ENCODE measurements at regions of chr20 and their contacts with region 1.

Region 1: GRCh38 chr20:50561379-50562078 is 51.3 kb downstream of the PTPN1 start:
- DNase-seq: peak; percentile 90
- H3K4me3 ChIP-seq: 0 out of 2 replicates have a peak overlapping the region, but pooled peaks have one; percentile 4
- H3K27ac ChIP-seq: peak overlapping the region; percentile 95
- H3K27me3 ChIP-seq: no peaks in the 10 kb centered on the region
- CTCF ChIP-seq: no peak

Region 2: GRCh38 chr20:50534567-50535551 is 26.7 kb before region 1 on chr20:
- CTCF ChIA-PET with region 1: no interaction called
- POLR2A ChIA-PET with region 1: interaction called, 12 read pairs
- DNase-seq: peak; percentile 58
- H3K4me3 ChIP-seq: no peak overlapping the region
- H3K27ac ChIP-seq: peak overlapping the region; percentile 86
- H3K27me3 ChIP-seq: no peaks in the 10 kb centered on the region
- CTCF ChIP-seq: no peak

Region 3: DNA sequence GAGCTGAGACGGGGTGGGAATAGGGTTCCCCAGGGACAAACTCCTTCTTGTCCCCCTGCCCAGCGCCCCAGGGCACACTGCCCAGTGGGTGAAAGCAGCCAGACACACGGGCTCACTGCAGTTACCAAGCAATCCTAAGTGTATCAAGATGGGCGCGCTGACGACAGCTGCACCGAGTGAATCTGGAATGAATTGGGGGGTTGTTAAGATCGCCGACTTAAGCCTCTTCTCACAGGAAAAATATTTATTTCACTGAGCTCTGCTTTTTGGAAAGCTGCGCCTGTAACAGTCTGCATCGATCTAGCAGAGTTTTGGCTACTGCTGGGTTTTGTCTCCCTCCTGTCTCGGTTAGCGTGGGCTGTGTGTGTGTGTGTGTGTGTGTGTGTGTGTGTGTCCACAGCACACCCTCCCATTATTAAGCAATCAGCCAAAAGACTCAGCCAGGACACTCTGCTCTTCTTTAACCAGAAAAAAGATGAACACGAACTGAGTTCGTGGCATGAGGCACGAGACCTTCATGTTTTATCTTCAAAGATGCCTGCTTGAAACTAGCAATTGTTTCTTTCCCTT is 93.9 kb after region 1 on chr20:
- CTCF ChIA-PET with region 1: interaction called, 11 read pairs
- POLR2A ChIA-PET with region 1: no interaction called
- DNase-seq: peak; percentile 93
- H3K4me3 ChIP-seq: peak overlapping the region; percentile 12; the same call in 1 of the 2 replicates
- H3K27ac ChIP-seq: peak overlapping the region; percentile 97
- H3K27me3 ChIP-seq: no peaks in the 10 kb centered on the region
- CTCF ChIP-seq: no peak